CD8-positive, alpha-beta T cell (primary cell): ENCODE measurements at regions of chr22 and their contacts with region 1.

Region 1: GRCh38 chr22:21952586-21953571 is at the start of gene PPM1F:
- DNase-seq: peak; percentile 86 to 97 (median 92)
- ATAC-seq: peak; percentile 91
- H3K4me3 ChIP-seq: peak within 1 kb of the TSS; percentile 73 to 78
- H3K4me3 Mint-ChIP-seq: peak within 1 kb of the TSS; percentile 88
- H3K27ac ChIP-seq: peak within 1 kb of the TSS in 1 of 2 experiments; percentile 44
- H3K27ac Mint-ChIP-seq: no peak within 1 kb of the TSS
- H3K4me1 ChIP-seq: peaks cover 11% of the 10 kb centered on the region
- H3K4me1 Mint-ChIP-seq: peaks cover 23% of the 10 kb centered on the region
- H3K27me3 ChIP-seq: no peaks in the 10 kb centered on the region
- H3K27me3 Mint-ChIP-seq: no peaks in the 10 kb centered on the region
- CTCF ChIP-seq: peak; percentile 82
- total RNA-seq, gene PPM1F: 12.7 to 13.5 TPM

Region 2: GRCh38 chr22:21606775-21607174 is 346.1 kb before region 1 on chr22:
- CTCF ChIA-PET with region 1: no interaction called
- POLR2A ChIA-PET with region 1: no interaction called
- intact Hi-C with region 1: no loop called
- DNase-seq: no peak
- ATAC-seq: no peak
- H3K4me3 ChIP-seq: no peak overlapping the region
- H3K4me3 Mint-ChIP-seq: no peak overlapping the region
- H3K27ac ChIP-seq: no peak overlapping the region
- H3K27ac Mint-ChIP-seq: no peak overlapping the region
- H3K4me1 ChIP-seq: no peaks in the 10 kb centered on the region
- H3K4me1 Mint-ChIP-seq: peaks cover 47% of the 10 kb centered on the region
- H3K27me3 ChIP-seq: no peaks in the 10 kb centered on the region
- H3K27me3 Mint-ChIP-seq: no peaks in the 10 kb centered on the region
- CTCF ChIP-seq: no peak

Region 3: DNA sequence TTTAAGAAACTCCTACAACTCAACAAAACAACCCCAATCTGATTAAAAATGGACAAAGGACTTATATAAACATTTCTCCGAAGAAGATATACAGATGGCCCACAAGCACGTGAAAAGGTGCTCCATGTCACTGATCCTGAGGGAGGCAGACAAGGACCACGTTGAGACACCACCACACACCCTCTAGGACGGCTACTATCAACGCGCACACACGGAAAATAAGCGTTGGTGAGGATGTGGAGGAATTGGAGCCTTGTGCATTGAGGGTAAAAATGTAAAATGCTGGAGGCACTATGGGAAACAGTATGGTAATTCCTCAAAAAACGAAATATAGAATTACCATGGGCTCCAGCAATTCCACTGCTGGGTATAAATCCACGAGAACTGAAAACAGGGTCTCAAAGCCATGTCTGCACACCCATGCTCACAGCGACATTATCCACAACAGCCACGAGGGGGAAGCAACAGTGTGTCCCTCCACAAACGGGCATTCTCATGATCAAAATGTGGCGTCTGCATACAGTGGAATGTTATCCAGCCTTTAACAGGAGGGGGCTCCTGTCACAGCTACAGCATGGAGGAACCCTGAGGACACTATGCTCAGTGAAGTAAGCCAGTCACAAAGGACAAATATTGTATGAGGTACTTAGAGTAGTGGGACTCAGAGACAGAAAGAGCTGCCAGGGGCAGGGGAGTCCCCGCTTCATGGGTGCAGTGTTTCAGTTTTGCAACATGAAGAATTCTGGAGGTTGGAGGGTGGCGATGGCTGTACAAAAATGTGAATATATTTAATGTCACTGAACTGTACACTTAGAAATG is 239.8 kb before region 1 on chr22:
- CTCF ChIA-PET with region 1: interaction called, 10 read pairs
- POLR2A ChIA-PET with region 1: no interaction called
- intact Hi-C with region 1: loop called (anchors 2 kb)
- DNase-seq: peak in 8 of 9 experiments; percentile 39 to 80 (median 60)
- ATAC-seq: peak; percentile 96
- H3K4me3 ChIP-seq: no peak overlapping the region
- H3K4me3 Mint-ChIP-seq: peak overlapping the region; percentile 37
- H3K27ac ChIP-seq: no peak overlapping the region
- H3K27ac Mint-ChIP-seq: no peak overlapping the region
- H3K4me1 ChIP-seq: no peaks in the 10 kb centered on the region
- H3K4me1 Mint-ChIP-seq: peaks cover 5% of the 10 kb centered on the region
- H3K27me3 ChIP-seq: no peaks in the 10 kb centered on the region
- H3K27me3 Mint-ChIP-seq: no peaks in the 10 kb centered on the region
- CTCF ChIP-seq: peak; percentile 81

Region 4: GRCh38 chr22:21735200-21736076 is 217.4 kb before region 1 on chr22 and contains the start of gene YPEL1:
- CTCF ChIA-PET with region 1: no interaction called
- POLR2A ChIA-PET with region 1: no interaction called
- intact Hi-C with region 1: loop called in 1 of 2 experiments (anchors 5 kb)
- DNase-seq: peak; percentile 92 to 98 (median 96)
- ATAC-seq: peak; percentile 91
- H3K4me3 ChIP-seq: peak within 1 kb of the TSS; percentile 59 to 78
- H3K4me3 Mint-ChIP-seq: peak within 1 kb of the TSS; percentile 91
- H3K27ac ChIP-seq: peak within 1 kb of the TSS; percentile 41 to 75
- H3K27ac Mint-ChIP-seq: peak within 1 kb of the TSS; percentile 88
- H3K4me1 ChIP-seq: peaks cover 12% of the 10 kb centered on the region
- H3K4me1 Mint-ChIP-seq: peaks cover 23% of the 10 kb centered on the region
- H3K27me3 ChIP-seq: no peaks in the 10 kb centered on the region
- H3K27me3 Mint-ChIP-seq: no peaks in the 10 kb centered on the region
- CTCF ChIP-seq: no peak
- total RNA-seq, gene YPEL1: 3.2 to 3.3 TPM

Region 5: DNA sequence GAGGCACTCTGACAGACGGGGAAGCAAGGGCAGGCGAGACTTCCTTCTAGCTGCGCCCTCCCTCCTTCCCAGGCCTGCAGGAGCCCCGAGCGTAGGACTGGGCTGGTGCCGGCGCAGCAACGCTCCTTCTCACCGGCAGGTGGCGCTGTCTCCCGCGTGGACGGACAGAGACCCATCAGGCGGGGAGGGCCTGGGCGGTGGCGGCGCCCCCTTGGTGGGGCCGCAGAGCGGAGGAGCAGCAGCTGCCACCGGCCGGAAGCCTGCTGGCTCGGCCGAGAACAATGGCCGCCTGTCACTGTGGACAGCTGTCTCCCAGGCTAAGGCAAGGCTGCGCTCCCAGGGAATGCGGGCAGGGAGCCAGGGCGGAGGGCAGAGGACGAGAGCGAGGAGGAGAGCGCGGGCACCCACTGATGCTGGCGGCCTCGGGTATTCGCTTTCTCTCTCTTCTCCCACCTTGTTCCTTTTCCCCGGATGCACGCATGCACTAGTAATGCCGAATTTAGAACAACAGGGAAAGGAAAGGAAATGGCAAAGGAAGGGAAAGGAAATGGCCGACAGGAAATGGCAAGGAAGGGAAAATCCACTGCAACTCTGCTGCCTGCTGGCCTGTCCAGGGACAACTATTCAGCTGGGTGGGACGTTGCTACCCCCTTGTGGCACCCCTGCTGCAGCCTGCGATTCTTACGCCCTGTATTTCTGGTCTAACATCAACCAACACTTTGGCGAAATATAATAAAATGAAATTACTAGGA is 14.6 kb before region 1 on chr22:
- CTCF ChIA-PET with region 1: interaction called, 197 read pairs
- POLR2A ChIA-PET with region 1: interaction called, 8 read pairs
- intact Hi-C with region 1: loop called (anchors 2 kb)
- DNase-seq: peak; percentile 81 to 95 (median 91)
- ATAC-seq: peak; percentile 98
- H3K4me3 ChIP-seq: peak overlapping the region; percentile 52 to 76
- H3K4me3 Mint-ChIP-seq: peak overlapping the region; percentile 83
- H3K27ac ChIP-seq: peak overlapping the region; percentile 43 to 86
- H3K27ac Mint-ChIP-seq: peak overlapping the region; percentile 74
- H3K4me1 ChIP-seq: peaks cover 23% of the 10 kb centered on the region
- H3K4me1 Mint-ChIP-seq: peaks cover 36% of the 10 kb centered on the region
- H3K27me3 ChIP-seq: no peaks in the 10 kb centered on the region
- H3K27me3 Mint-ChIP-seq: no peaks in the 10 kb centered on the region
- CTCF ChIP-seq: peak; percentile 96

Region 6: DNA sequence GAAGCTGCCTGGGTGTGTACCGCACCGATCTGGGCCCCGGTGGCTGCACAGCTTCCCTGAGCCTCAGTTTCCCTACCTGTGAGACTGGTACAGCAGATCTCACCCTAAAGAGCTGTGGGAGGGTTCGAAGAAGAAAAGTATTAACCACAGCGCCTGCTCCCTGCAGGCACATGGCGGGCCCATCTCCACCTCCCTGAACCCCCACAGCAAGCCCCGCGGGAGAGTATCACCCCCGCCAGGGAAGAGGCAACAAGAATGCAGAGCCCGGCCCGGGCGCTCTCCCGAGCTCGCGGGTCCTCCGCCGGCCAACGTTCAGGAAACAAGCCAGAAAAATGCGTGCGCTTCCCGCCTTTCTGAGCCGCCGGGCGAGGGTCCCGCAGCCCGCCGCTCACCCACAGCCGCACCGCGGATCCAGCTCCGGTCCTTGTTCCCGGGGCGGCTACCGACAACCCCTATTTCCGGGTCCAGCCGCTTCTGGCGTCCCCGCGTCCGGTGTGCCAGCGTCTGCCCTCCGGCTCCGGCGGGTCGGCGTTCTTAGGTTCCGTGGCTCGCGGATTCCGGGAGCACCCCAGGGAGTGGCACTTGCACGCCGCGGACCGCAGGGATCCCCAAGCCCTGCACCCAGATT is 29.6 kb after region 1 on chr22 and contains the start of gene TOP3B:
- CTCF ChIA-PET with region 1: interaction called, 9 read pairs
- POLR2A ChIA-PET with region 1: no interaction called
- intact Hi-C with region 1: loop called in 1 of 2 experiments (anchors 2 kb)
- DNase-seq: peak; percentile 65 to 90 (median 81)
- ATAC-seq: peak; percentile 95
- H3K4me3 ChIP-seq: peak within 1 kb of the TSS; percentile 93
- H3K4me3 Mint-ChIP-seq: peak within 1 kb of the TSS; percentile 87
- H3K27ac ChIP-seq: peak within 1 kb of the TSS; percentile 75 to 78
- H3K27ac Mint-ChIP-seq: peak within 1 kb of the TSS; percentile 89
- H3K4me1 ChIP-seq: peaks cover 15% of the 10 kb centered on the region
- H3K4me1 Mint-ChIP-seq: peaks cover 46% of the 10 kb centered on the region
- H3K27me3 ChIP-seq: no peaks in the 10 kb centered on the region
- H3K27me3 Mint-ChIP-seq: no peaks in the 10 kb centered on the region
- CTCF ChIP-seq: no peak
- total RNA-seq, gene TOP3B: 71.4 to 74.3 TPM

Region 7: GRCh38 chr22:22022255-22022840 is 69.5 kb after region 1 on chr22:
- CTCF ChIA-PET with region 1: no interaction called
- POLR2A ChIA-PET with region 1: no interaction called
- intact Hi-C with region 1: no loop called
- DNase-seq: no peak
- ATAC-seq: no peak
- H3K4me3 ChIP-seq: no peak overlapping the region
- H3K4me3 Mint-ChIP-seq: no peak overlapping the region
- H3K27ac ChIP-seq: no peak overlapping the region
- H3K27ac Mint-ChIP-seq: no peak overlapping the region
- H3K4me1 ChIP-seq: no peaks in the 10 kb centered on the region
- H3K4me1 Mint-ChIP-seq: no peaks in the 10 kb centered on the region
- H3K27me3 ChIP-seq: no peaks in the 10 kb centered on the region
- H3K27me3 Mint-ChIP-seq: peaks cover 5% of the 10 kb centered on the region
- CTCF ChIP-seq: no peak